Colonic mucosa (tissue), 4 donors: ENCODE measurements at regions of chr5 and their contacts with region 1.

Region 1: GRCh38 chr5:144203750-144204596 is 33.3 kb downstream of the KCTD16 start:
- DNase-seq: peak; percentile 48
- H3K4me3 ChIP-seq: no peak overlapping the region
- H3K27ac ChIP-seq: no peak overlapping the region
- H3K4me1 ChIP-seq: no peaks in the 10 kb centered on the region
- H3K27me3 ChIP-seq: peaks cover 7% of the 10 kb centered on the region
- CTCF ChIP-seq: peak; percentile 91

Region 2: GRCh38 chr5:144393641-144394435 is 189.9 kb after region 1 on chr5:
- intact Hi-C with region 1: loop called (anchors 2 kb)
- DNase-seq: no peak
- H3K4me3 ChIP-seq: no peak overlapping the region
- H3K27ac ChIP-seq: no peak overlapping the region
- H3K4me1 ChIP-seq: no peaks in the 10 kb centered on the region
- H3K27me3 ChIP-seq: no peaks in the 10 kb centered on the region
- CTCF ChIP-seq: no peak

Region 3: GRCh38 chr5:145101246-145101645 is 897.3 kb after region 1 on chr5:
- intact Hi-C with region 1: loop called (anchors 5 kb)
- DNase-seq: no peak
- H3K4me3 ChIP-seq: no peak overlapping the region
- H3K27ac ChIP-seq: no peak overlapping the region
- H3K4me1 ChIP-seq: no peaks in the 10 kb centered on the region
- H3K27me3 ChIP-seq: no peaks in the 10 kb centered on the region
- CTCF ChIP-seq: no peak

Region 4: GRCh38 chr5:145237843-145238242 is 1033.9 kb after region 1 on chr5:
- intact Hi-C with region 1: loop called (anchors 10 kb)
- DNase-seq: peak; percentile 47
- H3K4me3 ChIP-seq: no peak overlapping the region
- H3K27ac ChIP-seq: no peak overlapping the region
- H3K4me1 ChIP-seq: no peaks in the 10 kb centered on the region
- H3K27me3 ChIP-seq: no peaks in the 10 kb centered on the region
- CTCF ChIP-seq: peak; percentile 30